Activated CD8-positive, alpha-beta T cell treated with anti-CD3 and anti-CD28 coated beads, Interleukin-2, amount 10 ng/mL, durations not matched to agents 7 days and 5 days (primary cell): ENCODE measurements at regions of chr2 and their contacts with region 1.

Region 1: GRCh38 chr2:203782262-203782976 is 76.0 kb downstream of the CD28 start:
- DNase-seq: peak; percentile 72
- ATAC-seq: peak; percentile 90
- H3K4me3 Mint-ChIP-seq: no peak overlapping the region
- H3K27ac Mint-ChIP-seq: peak overlapping the region; percentile 44
- H3K4me1 Mint-ChIP-seq: peaks cover 62% of the 10 kb centered on the region
- H3K27me3 Mint-ChIP-seq: no peaks in the 10 kb centered on the region

Region 2: GRCh38 chr2:203763938-203764664 is 18.3 kb before region 1 on chr2:
- CTCF ChIA-PET with region 1: interaction called, 10 read pairs
- POLR2A ChIA-PET with region 1: interaction called, 3 read pairs
- DNase-seq: no peak
- ATAC-seq: peak; percentile 44
- H3K4me3 Mint-ChIP-seq: no peak overlapping the region
- H3K27ac Mint-ChIP-seq: peak overlapping the region; percentile 50
- H3K4me1 Mint-ChIP-seq: peaks cover 27% of the 10 kb centered on the region
- H3K27me3 Mint-ChIP-seq: no peaks in the 10 kb centered on the region

Region 3: GRCh38 chr2:203989521-203989920 is 207.1 kb after region 1 on chr2:
- CTCF ChIA-PET with region 1: no interaction called
- POLR2A ChIA-PET with region 1: no interaction called
- DNase-seq: no peak
- ATAC-seq: no peak
- H3K4me3 Mint-ChIP-seq: no peak overlapping the region
- H3K27ac Mint-ChIP-seq: no peak overlapping the region
- H3K4me1 Mint-ChIP-seq: peaks cover 10% of the 10 kb centered on the region
- H3K27me3 Mint-ChIP-seq: no peaks in the 10 kb centered on the region